ENCODE measurements at regions of chr5 and their contacts with region 1.

Region 1: DNA sequence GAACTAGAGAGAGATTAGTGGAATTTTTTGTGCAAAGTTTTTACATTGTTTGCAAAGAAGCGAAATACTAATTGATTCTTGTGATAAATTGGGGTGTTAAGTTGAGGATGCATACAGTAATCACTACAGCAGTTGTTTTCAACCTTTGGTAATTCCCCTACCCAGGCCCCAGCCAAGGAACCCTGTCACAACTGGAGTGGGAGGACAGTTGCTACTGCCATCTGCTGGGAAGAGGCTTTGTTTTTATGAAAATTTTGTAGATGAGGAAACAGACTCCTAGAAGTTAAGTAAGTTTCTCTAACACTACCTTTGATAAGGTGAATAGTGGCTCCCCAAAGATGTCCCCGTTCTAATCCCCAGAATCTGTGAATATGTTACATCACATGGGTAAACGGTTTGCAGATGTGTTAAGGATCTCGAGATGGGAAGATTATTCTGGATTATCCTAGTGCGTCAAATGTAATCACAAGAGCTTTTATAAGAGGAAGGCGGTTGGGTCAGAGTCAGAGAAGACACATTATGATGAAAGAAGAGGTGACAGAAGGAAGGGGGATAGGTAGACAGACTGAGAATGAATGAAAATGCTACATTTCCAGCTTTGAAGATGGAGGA is 34.0 kb upstream of the PPP1R2B start:
- DNase-seq: peak; percentile 45
- H3K4me3 Mint-ChIP-seq: no peak overlapping the region
- H3K27ac Mint-ChIP-seq: no peak overlapping the region
- H3K4me1 Mint-ChIP-seq: peaks cover 33% of the 10 kb centered on the region
- H3K27me3 Mint-ChIP-seq: no peaks in the 10 kb centered on the region

Region 2: GRCh38 chr5:155616779-155617392 is 1199.2 kb before region 1 on chr5:
- intact Hi-C with region 1: loop called (anchors 5 kb)
- DNase-seq: peak; percentile 34
- H3K4me3 Mint-ChIP-seq: no peak overlapping the region
- H3K27ac Mint-ChIP-seq: no peak overlapping the region
- H3K4me1 Mint-ChIP-seq: no peaks in the 10 kb centered on the region
- H3K27me3 Mint-ChIP-seq: peaks cover 7% of the 10 kb centered on the region

Region 3: GRCh38 chr5:155943516-155944407 is 872.3 kb before region 1 on chr5:
- intact Hi-C with region 1: loop called (anchors 1 kb)
- DNase-seq: peak; percentile 19
- H3K4me3 Mint-ChIP-seq: no peak overlapping the region
- H3K27ac Mint-ChIP-seq: no peak overlapping the region
- H3K4me1 Mint-ChIP-seq: peaks cover 7% of the 10 kb centered on the region
- H3K27me3 Mint-ChIP-seq: peaks cover 14% of the 10 kb centered on the region

Region 4: GRCh38 chr5:156420665-156421064 is 395.4 kb before region 1 on chr5:
- intact Hi-C with region 1: loop called (anchors 10 kb)
- DNase-seq: no peak
- H3K4me3 Mint-ChIP-seq: no peak overlapping the region
- H3K27ac Mint-ChIP-seq: no peak overlapping the region
- H3K4me1 Mint-ChIP-seq: no peaks in the 10 kb centered on the region
- H3K27me3 Mint-ChIP-seq: peaks cover 17% of the 10 kb centered on the region

Region 5: GRCh38 chr5:156715287-156715686 is 100.8 kb before region 1 on chr5:
- intact Hi-C with region 1: loop called (anchors 2 kb)
- DNase-seq: no peak
- H3K4me3 Mint-ChIP-seq: no peak overlapping the region
- H3K27ac Mint-ChIP-seq: no peak overlapping the region
- H3K4me1 Mint-ChIP-seq: no peaks in the 10 kb centered on the region
- H3K27me3 Mint-ChIP-seq: peaks cover 18% of the 10 kb centered on the region

Region 6: DNA sequence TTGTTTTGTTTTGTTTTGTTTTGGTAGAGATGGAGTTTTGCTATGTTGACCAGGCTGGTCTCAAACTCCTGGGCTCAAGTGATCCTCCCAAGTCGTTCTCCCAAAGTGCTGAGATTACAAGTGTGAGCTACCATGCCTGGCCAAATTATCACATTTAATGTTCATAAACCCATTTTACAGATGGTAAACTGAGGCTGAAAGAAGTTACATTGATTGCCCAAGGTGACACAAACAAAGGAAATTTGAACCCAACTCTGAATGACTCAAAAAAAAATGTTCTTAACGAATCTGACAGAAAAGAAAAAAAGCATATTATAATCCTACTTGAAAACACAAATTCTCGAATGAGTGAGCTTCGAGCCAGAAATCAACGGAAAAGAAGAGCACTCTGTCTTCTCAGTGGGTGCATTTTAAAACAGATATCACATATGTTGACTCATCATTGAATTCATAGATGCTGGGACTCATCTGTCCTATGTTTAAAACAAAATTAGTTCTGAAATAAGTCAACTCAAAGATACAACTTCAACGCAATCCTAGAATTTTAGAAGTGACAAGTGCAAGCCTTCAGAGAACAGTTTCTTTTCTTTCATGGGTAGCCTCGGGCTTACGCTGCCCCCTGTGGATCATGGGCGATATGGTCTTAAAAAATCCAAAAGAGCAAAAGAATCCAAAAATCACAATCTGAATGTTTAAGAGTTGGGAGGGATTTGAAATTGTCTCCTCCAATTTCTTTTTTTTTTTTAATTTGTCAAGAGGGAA is 118.5 kb after region 1 on chr5:
- intact Hi-C with region 1: loop called (anchors 1 kb)
- DNase-seq: peak; percentile 62
- H3K4me3 Mint-ChIP-seq: peak overlapping the region; percentile 49
- H3K27ac Mint-ChIP-seq: peak overlapping the region; percentile 94
- H3K4me1 Mint-ChIP-seq: peaks cover 88% of the 10 kb centered on the region
- H3K27me3 Mint-ChIP-seq: no peaks in the 10 kb centered on the region

Measured in activated T-helper 1 cell treated with anti-CD3 and anti-CD28 coated beads, Interleukin-12 subunit alpha, Interleukin-12 subunit beta, Interleukin-2, Interleukin-4 antibody, amounts not matched to agents 30 ng/mL and 10 ng/mL and 1 ng/mL, durations not matched to agents 14 hours and 24 hours and 36 hours (primary cell).